ENCODE measurements at regions of chr20 and their contacts with region 1.

Region 1: GRCh38 chr20:44609511-44610312 is 27.3 kb downstream of the PKIG start:
- DNase-seq: peak; percentile 77 to 91 (median 86)
- ATAC-seq: peak; percentile 73 to 80
- H3K4me3 Mint-ChIP-seq: peak overlapping the region; percentile 65 to 90 (median 82)
- H3K27ac Mint-ChIP-seq: peak overlapping the region; percentile 97 to 100 (median 100)
- H3K4me1 Mint-ChIP-seq: peaks cover 19 to 51% (median 42%) of the 10 kb centered on the region in 4 donors
- H3K27me3 Mint-ChIP-seq: peaks cover 0 to 3% (median 0%) of the 10 kb centered on the region in 5 donors

Region 2: GRCh38 chr20:44384423-44385027 is 225.2 kb before region 1 on chr20:
- POLR2A ChIA-PET with region 1: interaction called, 12 read pairs
- DNase-seq: peak; percentile 60 to 90 (median 78)
- ATAC-seq: peak; percentile 79 to 85
- H3K4me3 Mint-ChIP-seq: no peak overlapping the region
- H3K27ac Mint-ChIP-seq: peak overlapping the region in 2 of 10 donors; percentile 8 to 67
- H3K4me1 Mint-ChIP-seq: peaks cover 5 to 17% (median 9%) of the 10 kb centered on the region in 4 donors
- H3K27me3 Mint-ChIP-seq: peaks cover 1 to 12% (median 10%) of the 10 kb centered on the region in 5 donors

Region 3: DNA sequence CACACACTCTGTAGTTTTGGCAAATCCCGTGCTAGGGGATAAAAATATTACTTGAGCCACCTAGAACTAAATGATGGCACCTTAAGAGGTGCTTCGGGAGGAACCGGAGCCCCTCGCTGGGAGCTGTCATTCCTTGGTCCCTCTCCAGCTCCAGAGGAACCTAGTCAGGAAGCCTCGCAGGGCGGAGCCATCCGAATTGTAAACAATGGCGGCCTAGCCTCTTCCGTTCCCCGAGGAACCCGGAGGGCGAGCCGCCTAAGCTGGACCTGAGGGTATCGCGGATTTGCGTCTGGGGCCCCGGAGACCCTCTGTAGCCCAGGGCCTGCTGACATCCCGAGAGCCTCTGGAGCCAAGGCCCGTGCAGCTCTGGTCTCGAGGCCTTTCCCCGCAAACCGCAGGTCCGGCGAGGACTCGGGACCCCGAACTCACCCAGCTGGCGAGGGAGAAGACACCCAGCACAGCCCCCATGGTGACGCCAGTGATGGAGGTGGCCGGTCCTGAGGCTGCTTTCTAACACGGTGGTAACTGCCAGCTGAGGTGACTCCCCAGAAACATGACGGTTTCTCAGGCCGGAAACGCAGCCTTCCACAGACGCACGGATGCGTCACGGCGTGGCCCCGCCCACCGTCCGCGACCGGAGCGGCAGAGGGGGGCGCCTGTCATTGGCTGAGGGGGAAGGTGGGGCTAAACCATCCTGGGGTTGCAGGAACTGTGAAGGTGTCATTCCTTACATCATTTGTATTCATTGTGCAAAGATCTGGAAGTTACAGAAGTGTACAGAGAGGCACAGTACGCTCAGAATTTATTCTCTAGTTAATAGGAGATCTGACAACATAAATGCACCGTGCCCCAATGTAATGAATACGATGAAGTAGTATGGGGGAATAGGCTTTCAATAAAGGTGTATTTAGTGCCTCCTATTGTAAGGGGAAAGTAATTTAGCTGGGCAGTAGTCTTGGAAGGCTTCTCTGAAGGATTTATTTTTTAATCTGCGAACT is 87.9 kb before region 1 on chr20 and contains the start of gene SERINC3:
- POLR2A ChIA-PET with region 1: interaction called, 19 read pairs
- DNase-seq: peak; percentile 95 to 99 (median 98)
- ATAC-seq: peak; percentile 89 to 97
- H3K4me3 Mint-ChIP-seq: peak within 1 kb of the TSS; percentile 83 to 92 (median 90)
- H3K27ac Mint-ChIP-seq: peak within 1 kb of the TSS; percentile 86 to 99 (median 96)
- H3K4me1 Mint-ChIP-seq: peaks cover 24 to 65% (median 59%) of the 10 kb centered on the region in 4 donors
- H3K27me3 Mint-ChIP-seq: no peaks in the 10 kb centered on the region
- polyA plus RNA-seq, gene SERINC3: 163 to 207 (median 173) TPM

Region 4: GRCh38 chr20:44642203-44643153 is 32.8 kb after region 1 on chr20:
- POLR2A ChIA-PET with region 1: interaction called, 84 read pairs
- DNase-seq: peak in 5 of 10 donors; percentile 16 to 49 (median 39)
- ATAC-seq: peak; percentile 43 to 48
- H3K4me3 Mint-ChIP-seq: peak overlapping the region; percentile 38 to 83 (median 67)
- H3K27ac Mint-ChIP-seq: peak overlapping the region; percentile 91 to 100 (median 96)
- H3K4me1 Mint-ChIP-seq: peaks cover 45 to 78% (median 71%) of the 10 kb centered on the region in 4 donors
- H3K27me3 Mint-ChIP-seq: no peaks in the 10 kb centered on the region

Region 5: GRCh38 chr20:44683263-44684046 is 73.7 kb after region 1 on chr20:
- POLR2A ChIA-PET with region 1: interaction called, 17 read pairs
- DNase-seq: peak in 8 of 10 donors; percentile 24 to 77 (median 48)
- ATAC-seq: peak; percentile 70 to 92
- H3K4me3 Mint-ChIP-seq: no peak overlapping the region
- H3K27ac Mint-ChIP-seq: peak overlapping the region in 4 of 10 donors; percentile 12 to 72 (median 28)
- H3K4me1 Mint-ChIP-seq: peaks cover 6 to 16% (median 8%) of the 10 kb centered on the region in 4 donors
- H3K27me3 Mint-ChIP-seq: peaks cover 0 to 2% (median 0%) of the 10 kb centered on the region in 5 donors